H1 (cell line): ENCODE measurements at regions of chr5 and their contacts with region 1.

Region 1: GRCh38 chr5:10564838-10565784 is 1.2 kb downstream of the ANKRD33B start:
- DNase-seq: peak in 1 of 2 experiments; percentile 69
- H3K4me3 ChIP-seq: peak overlapping the region; percentile 53 to 74 (median 66)
- H3K27ac ChIP-seq: no peak overlapping the region
- H3K4me1 ChIP-seq: peaks cover 8 to 13% (median 10%) of the 10 kb centered on the region in 4 experiments
- H3K27me3 ChIP-seq: peaks cover 20 to 59% (median 55%) of the 10 kb centered on the region in 4 experiments
- CTCF ChIP-seq: no peak
- EP300 ChIP-seq: no peak
- POLR2A ChIP-seq: no peak
- RAD21 ChIP-seq: no peak

Region 2: DNA sequence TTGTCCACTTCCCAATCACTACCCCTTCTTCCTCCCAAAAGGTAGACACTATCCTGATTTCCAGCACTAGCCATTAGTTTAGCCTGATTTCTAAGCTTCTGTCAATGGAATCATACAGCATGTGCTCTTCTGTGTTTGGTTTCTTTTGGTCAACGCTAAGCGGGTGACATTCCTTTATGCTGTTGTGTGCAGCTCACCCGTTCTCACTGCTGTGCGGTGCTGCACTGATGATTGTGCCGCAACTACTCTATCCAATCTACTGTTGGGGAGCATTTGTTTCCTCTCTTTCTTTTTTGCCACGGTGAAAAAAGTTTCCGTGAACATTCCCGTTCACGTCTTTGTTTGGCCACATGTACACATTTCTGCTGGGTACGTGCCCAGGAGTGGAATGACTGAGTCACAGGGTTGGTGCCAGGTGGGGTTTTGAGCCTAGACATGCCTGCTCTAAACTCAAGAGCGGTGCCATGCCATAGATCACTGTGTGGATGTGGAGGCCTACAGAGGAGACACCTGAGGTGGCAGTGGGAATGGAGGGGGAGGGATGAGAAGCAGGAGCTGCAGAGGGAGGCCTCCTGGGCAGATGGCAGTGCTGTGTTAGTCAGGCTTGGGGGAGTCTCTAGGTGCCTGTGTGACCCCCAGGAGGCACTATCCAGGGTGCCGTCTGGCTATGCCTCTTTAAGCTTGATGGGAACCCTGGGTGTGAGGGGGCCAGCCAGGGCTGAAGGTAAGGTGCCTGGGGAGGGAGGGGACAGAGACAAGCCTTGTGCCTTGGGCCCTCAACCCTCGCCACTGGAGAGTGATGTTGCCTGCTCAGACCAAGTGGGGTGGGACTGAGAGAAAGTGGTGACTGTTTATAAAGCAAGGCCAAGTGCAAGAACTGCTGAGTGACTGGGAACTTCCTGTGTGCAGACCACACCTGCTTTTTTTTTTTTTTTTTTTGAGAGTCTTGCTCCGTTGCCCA is 12.6 kb before region 1 on chr5:
- CTCF ChIA-PET with region 1: interaction called, 4 read pairs
- POLR2A ChIA-PET with region 1: interaction called, 10 read pairs
- DNase-seq: no peak
- H3K4me3 ChIP-seq: no peak overlapping the region
- H3K27ac ChIP-seq: peak overlapping the region; percentile 58; the same call in 1 of the 2 replicates
- H3K4me1 ChIP-seq: peaks cover 9 to 28% (median 11%) of the 10 kb centered on the region in 4 experiments
- H3K27me3 ChIP-seq: no peaks in the 10 kb centered on the region; a peak in 1 of 7 replicates
- CTCF ChIP-seq: no peak
- EP300 ChIP-seq: no peak
- POLR2A ChIP-seq: no peak
- RAD21 ChIP-seq: no peak

Region 3: DNA sequence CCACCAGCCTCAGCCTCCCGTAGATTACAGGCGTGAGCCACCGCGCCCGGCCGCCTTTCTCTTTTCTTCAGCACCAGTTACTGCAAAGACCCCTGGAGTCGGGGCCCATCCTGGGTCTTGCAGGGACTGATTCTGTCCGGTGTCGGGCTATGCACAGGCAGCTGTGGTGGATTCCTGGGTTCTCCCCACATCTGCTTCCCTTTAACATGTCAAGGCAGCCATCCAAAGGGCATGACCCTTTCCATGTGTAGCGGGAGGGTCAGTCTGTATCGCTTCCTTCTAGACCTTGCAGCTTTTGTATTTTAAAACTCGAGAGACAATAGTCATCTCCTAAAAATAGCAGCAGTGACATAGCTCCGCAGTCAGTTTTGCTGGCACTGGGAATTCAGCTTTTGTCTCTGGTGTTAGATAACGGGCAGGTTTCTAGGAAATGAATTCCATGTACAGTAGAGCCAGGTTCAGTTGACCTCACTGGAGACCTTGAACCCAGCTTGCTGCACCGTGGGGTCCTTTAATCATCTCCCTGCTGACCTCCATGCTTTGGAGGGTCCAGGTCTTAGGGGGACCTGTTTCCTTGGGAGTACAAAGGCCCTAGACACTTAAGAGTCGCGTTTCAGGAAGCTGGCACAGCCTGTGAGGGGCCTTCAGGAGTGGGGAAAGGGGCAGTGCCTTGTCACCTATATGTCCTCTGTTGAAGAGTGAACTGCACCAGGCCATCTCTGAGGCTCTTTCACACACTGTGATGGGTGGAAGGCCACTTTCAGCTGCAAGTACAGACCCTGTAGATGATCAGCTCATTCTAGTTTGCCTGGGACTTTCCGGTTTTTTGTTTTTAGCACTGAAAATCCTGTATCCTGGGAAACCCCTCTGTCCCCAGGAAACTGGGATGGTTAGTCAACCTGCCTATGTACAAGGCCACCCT is 12.5 kb after region 1 on chr5:
- CTCF ChIA-PET with region 1: interaction called, 17 read pairs
- POLR2A ChIA-PET with region 1: no interaction called
- DNase-seq: no peak
- H3K4me3 ChIP-seq: no peak overlapping the region
- H3K27ac ChIP-seq: no peak overlapping the region
- H3K4me1 ChIP-seq: peaks cover 0 to 5% (median 3%) of the 10 kb centered on the region in 4 experiments; a peak in 4 of 7 replicates
- H3K27me3 ChIP-seq: no peaks in the 10 kb centered on the region
- CTCF ChIP-seq: no peak
- EP300 ChIP-seq: no peak
- POLR2A ChIP-seq: no peak
- RAD21 ChIP-seq: no peak

Region 4: GRCh38 chr5:10583663-10584572 is 18.8 kb after region 1 on chr5:
- CTCF ChIA-PET with region 1: interaction called, 10 read pairs
- POLR2A ChIA-PET with region 1: no interaction called
- DNase-seq: peak in 1 of 2 experiments; percentile 29
- H3K4me3 ChIP-seq: no peak overlapping the region
- H3K27ac ChIP-seq: no peak overlapping the region
- H3K4me1 ChIP-seq: peaks cover 0 to 6% (median 5%) of the 10 kb centered on the region in 4 experiments; a peak in 6 of 7 replicates
- H3K27me3 ChIP-seq: no peaks in the 10 kb centered on the region
- CTCF ChIP-seq: no peak
- EP300 ChIP-seq: no peak
- POLR2A ChIP-seq: no peak
- RAD21 ChIP-seq: no peak

Region 5: DNA sequence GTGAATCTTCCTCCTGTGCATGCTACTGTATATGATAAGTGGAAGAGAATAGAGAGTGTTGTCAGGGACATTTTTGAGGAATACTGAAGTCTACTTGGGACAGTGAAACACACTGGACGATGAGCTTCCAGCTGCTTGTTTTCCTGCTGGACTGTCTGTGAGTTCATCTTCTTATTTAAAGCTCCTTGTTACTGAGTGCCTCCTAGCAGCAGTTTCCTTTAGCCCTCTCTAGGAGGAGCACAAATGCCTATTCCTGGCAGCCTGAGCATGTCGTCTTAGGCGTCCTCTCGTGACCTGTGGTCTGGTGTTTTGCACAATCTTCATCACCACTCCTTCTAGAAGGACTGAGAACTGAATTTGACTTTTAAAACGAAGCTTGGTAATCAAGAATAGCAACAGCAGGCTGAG is 42.6 kb after region 1 on chr5:
- CTCF ChIA-PET with region 1: interaction called, 11 read pairs
- POLR2A ChIA-PET with region 1: no interaction called
- DNase-seq: no peak
- H3K4me3 ChIP-seq: no peak overlapping the region; a peak in 1 of 8 replicates
- H3K27ac ChIP-seq: no peak overlapping the region
- H3K4me1 ChIP-seq: peaks cover 4 to 31% (median 15%) of the 10 kb centered on the region in 4 experiments; a peak in 6 of 7 replicates
- H3K27me3 ChIP-seq: no peaks in the 10 kb centered on the region
- CTCF ChIP-seq: peak in 2 of 3 experiments; percentile 7 to 35; a peak in 2 of 4 replicates
- EP300 ChIP-seq: no peak
- POLR2A ChIP-seq: no peak
- RAD21 ChIP-seq: peak in 1 of 2 experiments; percentile 37; a peak in 3 of 4 replicates

Region 6: GRCh38 chr5:10746711-10747110 is 181.6 kb after region 1 on chr5:
- CTCF ChIA-PET with region 1: no interaction called
- POLR2A ChIA-PET with region 1: no interaction called
- DNase-seq: no peak
- H3K4me3 ChIP-seq: no peak overlapping the region
- H3K27ac ChIP-seq: no peak overlapping the region
- H3K4me1 ChIP-seq: no peaks in the 10 kb centered on the region
- H3K27me3 ChIP-seq: no peaks in the 10 kb centered on the region
- CTCF ChIP-seq: no peak
- EP300 ChIP-seq: no peak
- POLR2A ChIP-seq: no peak
- RAD21 ChIP-seq: no peak